ENCODE measurements at regions of chr16 and their contacts with region 1.

Region 1: DNA sequence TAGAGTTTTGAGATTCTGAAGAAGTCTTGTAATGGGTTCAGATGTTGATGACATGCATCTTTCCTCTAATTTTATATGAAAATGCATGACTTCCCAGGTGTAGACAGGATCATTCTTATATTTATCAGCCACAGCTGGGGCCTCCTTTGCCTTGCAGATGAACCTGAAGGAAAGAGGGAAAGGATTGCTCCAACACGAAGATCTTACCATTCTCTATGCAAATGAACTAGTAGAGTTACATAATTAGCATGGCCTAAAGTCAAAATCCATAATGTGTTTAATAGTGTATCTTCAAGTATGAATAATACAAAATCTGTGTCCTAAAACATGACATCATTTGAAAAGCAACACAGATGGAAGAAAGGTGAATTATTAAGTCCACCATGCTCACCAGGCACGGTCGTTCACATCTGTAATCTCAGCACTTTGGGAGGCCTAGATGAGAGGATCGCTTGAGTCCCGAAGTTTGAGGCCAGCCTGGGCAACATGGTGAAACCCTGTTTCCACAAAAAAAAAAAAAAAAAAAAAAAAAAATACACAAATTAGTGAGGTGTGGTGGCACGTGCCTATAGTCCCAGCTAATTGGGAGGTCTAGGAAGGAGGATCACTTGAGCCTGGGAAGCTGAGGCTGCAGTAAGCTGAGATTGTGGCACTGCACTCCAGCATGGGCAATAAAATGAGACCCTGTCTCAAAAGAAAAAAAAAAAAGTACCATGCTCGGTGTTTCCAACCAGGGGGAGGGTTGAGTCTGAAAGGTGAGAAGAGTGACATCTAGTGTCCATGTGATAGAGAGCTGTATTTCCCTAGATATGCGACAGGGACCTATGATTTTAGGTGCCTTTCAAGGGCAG is 6.3 kb downstream of the VWA3A start:
- DNase-seq: peak; percentile 61
- H3K4me3 Mint-ChIP-seq: peak overlapping the region; percentile 49
- H3K27ac Mint-ChIP-seq: no peak overlapping the region
- H3K4me1 Mint-ChIP-seq: no peaks in the 10 kb centered on the region
- H3K27me3 Mint-ChIP-seq: peaks cover 21% of the 10 kb centered on the region
- CTCF ChIP-seq: peak; percentile 60

Region 2: GRCh38 chr16:21989133-21989532 is 109.5 kb before region 1 on chr16:
- CTCF ChIA-PET with region 1: interaction called, 15 read pairs
- POLR2A ChIA-PET with region 1: interaction called, 4 read pairs
- intact Hi-C with region 1: no loop called
- DNase-seq: no peak
- H3K4me3 Mint-ChIP-seq: no peak overlapping the region
- H3K27ac Mint-ChIP-seq: no peak overlapping the region
- H3K4me1 Mint-ChIP-seq: no peaks in the 10 kb centered on the region
- H3K27me3 Mint-ChIP-seq: no peaks in the 10 kb centered on the region
- CTCF ChIP-seq: no peak

Region 3: GRCh38 chr16:22007509-22008214 is 91.0 kb before region 1 on chr16 and contains the start of gene MOSMO:
- CTCF ChIA-PET with region 1: interaction called, 87 read pairs
- POLR2A ChIA-PET with region 1: interaction called, 3 read pairs
- intact Hi-C with region 1: no loop called
- DNase-seq: peak; percentile 74
- H3K4me3 Mint-ChIP-seq: peak within 1 kb of the TSS; percentile 90
- H3K27ac Mint-ChIP-seq: peak within 1 kb of the TSS; percentile 70
- H3K4me1 Mint-ChIP-seq: peaks cover 26% of the 10 kb centered on the region
- H3K27me3 Mint-ChIP-seq: no peaks in the 10 kb centered on the region
- CTCF ChIP-seq: no peak
- total RNA-seq, gene MOSMO: 16.4 and 17.1 TPM in 2 replicates

Region 4: GRCh38 chr16:22109258-22109898 is 10.7 kb after region 1 on chr16:
- CTCF ChIA-PET with region 1: interaction called, 25 read pairs
- POLR2A ChIA-PET with region 1: interaction called, 3 read pairs
- intact Hi-C with region 1: no loop called
- DNase-seq: no peak
- H3K4me3 Mint-ChIP-seq: no peak overlapping the region
- H3K27ac Mint-ChIP-seq: no peak overlapping the region
- H3K4me1 Mint-ChIP-seq: no peaks in the 10 kb centered on the region
- H3K27me3 Mint-ChIP-seq: peaks cover 56% of the 10 kb centered on the region
- CTCF ChIP-seq: no peak

Region 5: DNA sequence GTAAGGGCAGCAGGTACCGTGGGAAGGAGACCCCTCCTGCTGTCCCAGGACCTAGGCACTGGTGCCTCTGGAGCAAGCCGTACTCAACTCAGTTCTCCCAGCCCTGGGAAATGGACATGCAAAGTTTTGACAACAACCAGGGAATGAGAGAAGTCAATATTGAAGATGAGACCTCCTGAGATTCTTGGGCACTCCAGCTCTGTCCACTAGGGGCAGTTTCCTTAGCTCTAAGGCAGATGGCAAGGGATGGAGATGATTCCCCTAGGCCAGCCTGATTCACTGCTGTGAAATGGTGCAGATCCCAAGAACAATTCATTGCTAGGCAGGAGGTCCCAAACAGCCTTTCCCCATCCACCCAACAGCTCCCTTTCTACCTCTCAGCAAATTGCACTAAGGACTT is 43.1 kb after region 1 on chr16:
- CTCF ChIA-PET with region 1: interaction called, 14 read pairs
- POLR2A ChIA-PET with region 1: no interaction called
- intact Hi-C with region 1: no loop called
- DNase-seq: peak; percentile 23
- H3K4me3 Mint-ChIP-seq: no peak overlapping the region
- H3K27ac Mint-ChIP-seq: no peak overlapping the region
- H3K4me1 Mint-ChIP-seq: no peaks in the 10 kb centered on the region
- H3K27me3 Mint-ChIP-seq: peaks cover 46% of the 10 kb centered on the region
- CTCF ChIP-seq: peak; percentile 37